ENCODE measurements at regions of chr1 and their contacts with region 1.

Region 1: GRCh38 chr1:26695356-26696118 is at the start of gene ARID1A:
- DNase-seq: peak; percentile 95 to 99 (median 98)
- ATAC-seq: peak; percentile 81 to 84
- H3K4me3 ChIP-seq: peak within 1 kb of the TSS; percentile 98
- H3K27ac ChIP-seq: peak within 1 kb of the TSS; percentile 99
- H3K4me1 ChIP-seq: peaks cover 7% of the 10 kb centered on the region
- H3K27me3 ChIP-seq: no peaks in the 10 kb centered on the region
- total RNA-seq, gene ARID1A: 33.1 to 45.3 (median 40.0) TPM

Region 2: DNA sequence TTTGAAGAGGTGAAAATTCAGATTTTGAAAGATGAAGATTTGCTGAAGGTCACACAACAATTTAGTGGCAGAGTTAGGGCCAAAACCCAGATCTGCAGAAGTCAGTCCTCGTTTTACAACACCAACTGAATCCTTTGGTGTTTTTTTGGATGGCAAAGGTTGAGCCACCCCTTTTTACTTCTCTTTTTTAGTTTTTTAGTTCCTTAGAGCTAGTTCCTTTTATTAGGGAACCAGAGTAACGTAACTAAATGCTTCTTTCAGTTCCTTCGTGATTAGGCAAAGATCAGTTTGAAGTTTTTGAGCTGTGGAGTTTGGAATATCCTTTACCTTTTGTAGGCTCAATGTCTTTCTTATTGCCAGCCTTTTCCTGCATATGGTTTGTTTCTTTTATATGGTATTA is 67.6 kb before region 1 on chr1:
- intact Hi-C with region 1: no loop called
- DNase-seq: no peak
- ATAC-seq: no peak
- H3K4me3 ChIP-seq: no peak overlapping the region
- H3K27ac ChIP-seq: no peak overlapping the region
- H3K4me1 ChIP-seq: no peaks in the 10 kb centered on the region
- H3K27me3 ChIP-seq: no peaks in the 10 kb centered on the region

Region 3: DNA sequence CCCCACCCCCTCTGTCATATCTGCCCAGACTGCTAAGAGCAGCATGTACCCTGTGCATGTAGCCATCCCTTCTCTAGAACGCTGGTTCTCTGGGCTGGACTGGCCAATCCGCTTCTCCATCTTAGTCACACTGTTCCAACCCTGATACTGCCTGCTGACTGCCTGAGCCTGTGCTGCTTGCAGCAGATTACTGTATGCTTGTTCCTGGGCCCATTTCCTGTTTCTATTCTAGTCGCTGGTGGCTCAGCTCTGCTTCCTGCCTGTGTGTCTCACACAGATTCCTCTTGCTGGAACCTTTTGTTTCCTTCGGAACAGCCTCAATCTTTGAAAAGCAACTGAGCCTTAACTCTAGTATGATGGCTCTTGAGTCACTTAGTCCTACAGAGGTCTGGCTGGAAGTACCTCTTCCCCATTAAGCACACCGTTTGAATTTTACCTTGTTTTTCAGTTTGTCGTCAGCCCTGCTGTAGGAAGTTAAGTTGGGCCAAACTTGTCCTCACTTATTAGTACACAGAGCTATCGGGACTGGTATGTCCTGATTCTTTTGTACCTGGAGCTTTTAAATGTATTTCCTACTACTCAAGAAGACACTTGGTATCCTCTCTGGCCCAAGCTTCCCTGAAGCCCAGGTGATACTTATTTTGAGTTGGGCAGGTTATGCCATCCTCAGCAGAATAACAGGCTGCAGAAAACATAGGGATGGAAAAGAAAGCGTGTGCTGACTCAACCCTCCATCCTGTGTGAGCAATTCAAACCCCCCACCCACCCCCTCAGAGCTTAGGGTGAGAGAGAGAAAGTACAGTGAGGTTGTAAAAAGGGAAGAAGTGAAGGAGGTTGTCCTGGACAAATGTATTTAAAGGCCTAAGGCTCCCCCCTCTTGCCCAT is 48.8 kb after region 1 on chr1:
- intact Hi-C with region 1: loop called in 1 of 4 experiments (anchors 10 kb)
- DNase-seq: peak; percentile 70 to 83 (median 79)
- ATAC-seq: peak; percentile 96 to 98
- H3K4me3 ChIP-seq: no peak overlapping the region
- H3K27ac ChIP-seq: peak overlapping the region; percentile 78
- H3K4me1 ChIP-seq: peaks cover 12% of the 10 kb centered on the region
- H3K27me3 ChIP-seq: no peaks in the 10 kb centered on the region

Region 4: GRCh38 chr1:27704958-27705357 is 1009.4 kb after region 1 on chr1:
- intact Hi-C with region 1: no loop called
- DNase-seq: no peak
- ATAC-seq: no peak
- H3K4me3 ChIP-seq: no peak overlapping the region
- H3K27ac ChIP-seq: no peak overlapping the region
- H3K4me1 ChIP-seq: no peaks in the 10 kb centered on the region
- H3K27me3 ChIP-seq: no peaks in the 10 kb centered on the region